Activated naive CD4-positive, alpha-beta T cell treated with anti-CD3 and anti-CD28 coated beads, Interleukin-2, amount 10 ng/mL, durations not matched to agents 7 days and 5 days (primary cell): ENCODE measurements at regions of chr4 and their contacts with region 1.

Region 1: GRCh38 chr4:81069706-81070331 is 39.3 kb downstream of the BMP3 start:
- DNase-seq: peak; percentile 71
- H3K4me3 Mint-ChIP-seq: no peak overlapping the region
- H3K27ac Mint-ChIP-seq: no peak overlapping the region
- H3K4me1 Mint-ChIP-seq: no peaks in the 10 kb centered on the region
- H3K27me3 Mint-ChIP-seq: peaks cover 9% of the 10 kb centered on the region

Region 2: GRCh38 chr4:81260443-81261101 is 190.8 kb after region 1 on chr4:
- CTCF ChIA-PET with region 1: interaction called, 10 read pairs
- DNase-seq: no peak
- H3K4me3 Mint-ChIP-seq: no peak overlapping the region
- H3K27ac Mint-ChIP-seq: no peak overlapping the region
- H3K4me1 Mint-ChIP-seq: no peaks in the 10 kb centered on the region
- H3K27me3 Mint-ChIP-seq: no peaks in the 10 kb centered on the region

Region 3: DNA sequence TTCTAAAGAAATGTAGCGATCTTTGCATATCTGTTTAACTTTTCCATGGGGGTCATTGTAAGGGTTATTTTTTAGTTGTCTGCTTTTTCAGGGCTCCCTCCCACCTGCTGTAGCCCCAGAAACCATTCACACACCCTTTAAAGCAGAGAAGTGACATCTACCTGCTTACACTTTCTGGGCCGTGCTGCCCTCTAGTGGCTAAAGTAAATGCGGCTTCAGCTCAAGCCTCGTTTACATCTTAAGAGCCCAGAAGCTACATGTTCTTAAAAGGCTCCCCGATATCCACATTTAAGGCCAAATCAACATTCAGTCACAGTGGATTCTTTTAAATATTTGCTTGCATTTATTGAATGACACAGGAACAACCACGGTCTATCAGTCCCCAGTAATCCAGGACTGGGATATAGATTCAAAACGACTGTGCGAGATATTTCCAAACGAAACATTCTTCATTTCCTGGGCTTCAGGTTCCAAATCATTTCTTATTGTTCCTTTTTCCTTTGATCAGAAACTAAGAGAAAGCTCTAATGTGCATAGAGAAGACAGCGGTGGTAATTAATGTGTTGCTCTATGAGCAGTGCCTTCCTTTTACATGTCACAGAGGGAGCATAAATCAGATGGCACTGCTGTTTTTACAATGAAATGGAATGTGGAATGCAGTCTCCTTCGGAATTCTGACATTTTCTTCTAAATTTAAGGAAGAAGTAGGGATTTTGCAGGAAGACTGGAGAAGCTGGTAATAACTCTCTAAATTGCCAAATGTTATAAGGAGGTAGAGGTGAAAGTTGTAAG is 282.0 kb after region 1 on chr4:
- CTCF ChIA-PET with region 1: interaction called, 45 read pairs
- DNase-seq: peak; percentile 71
- H3K4me3 Mint-ChIP-seq: no peak overlapping the region
- H3K27ac Mint-ChIP-seq: no peak overlapping the region
- H3K4me1 Mint-ChIP-seq: no peaks in the 10 kb centered on the region
- H3K27me3 Mint-ChIP-seq: no peaks in the 10 kb centered on the region